Endothelial cell of umbilical vein (primary cell): ENCODE measurements at regions of chr3 and their contacts with region 1.

Region 1: DNA sequence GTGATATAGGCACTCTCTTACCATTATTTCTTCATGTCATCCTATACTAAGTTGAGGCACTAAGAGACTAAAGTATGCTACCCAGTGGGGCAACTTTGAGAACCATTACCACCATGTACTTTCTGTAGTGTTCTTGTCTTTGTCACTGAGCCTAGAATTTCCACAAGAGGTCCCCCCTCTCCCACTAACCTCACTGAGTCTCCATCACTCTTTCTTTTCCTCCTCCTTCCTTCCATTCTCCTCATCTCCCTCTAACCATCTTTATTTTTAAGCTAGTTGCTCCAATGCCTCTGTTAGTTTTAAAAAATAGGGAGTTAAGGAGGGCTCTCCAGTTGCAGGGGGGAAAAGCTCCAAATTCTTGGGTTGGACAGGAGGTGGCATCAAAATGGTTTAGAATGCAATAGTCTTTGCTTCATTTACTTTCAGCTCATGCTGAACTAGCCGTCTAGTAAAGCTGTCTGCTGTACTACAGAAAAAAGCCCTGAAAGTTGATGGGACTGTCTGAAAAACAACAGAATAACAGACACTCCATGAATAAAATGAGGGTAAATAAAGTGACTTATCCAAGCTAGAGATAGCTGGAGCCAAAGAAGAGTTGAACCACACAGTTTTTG is 85.1 kb upstream of the MYRIP start:
- DNase-seq: peak; percentile 58
- H3K4me3 ChIP-seq: no peak overlapping the region
- H3K27ac ChIP-seq: no peak overlapping the region
- H3K4me1 ChIP-seq: no peaks in the 10 kb centered on the region
- H3K27me3 ChIP-seq: no peaks in the 10 kb centered on the region
- CTCF ChIP-seq: peak; percentile 40 to 41
- POLR2A ChIP-seq: no peak

Region 2: DNA sequence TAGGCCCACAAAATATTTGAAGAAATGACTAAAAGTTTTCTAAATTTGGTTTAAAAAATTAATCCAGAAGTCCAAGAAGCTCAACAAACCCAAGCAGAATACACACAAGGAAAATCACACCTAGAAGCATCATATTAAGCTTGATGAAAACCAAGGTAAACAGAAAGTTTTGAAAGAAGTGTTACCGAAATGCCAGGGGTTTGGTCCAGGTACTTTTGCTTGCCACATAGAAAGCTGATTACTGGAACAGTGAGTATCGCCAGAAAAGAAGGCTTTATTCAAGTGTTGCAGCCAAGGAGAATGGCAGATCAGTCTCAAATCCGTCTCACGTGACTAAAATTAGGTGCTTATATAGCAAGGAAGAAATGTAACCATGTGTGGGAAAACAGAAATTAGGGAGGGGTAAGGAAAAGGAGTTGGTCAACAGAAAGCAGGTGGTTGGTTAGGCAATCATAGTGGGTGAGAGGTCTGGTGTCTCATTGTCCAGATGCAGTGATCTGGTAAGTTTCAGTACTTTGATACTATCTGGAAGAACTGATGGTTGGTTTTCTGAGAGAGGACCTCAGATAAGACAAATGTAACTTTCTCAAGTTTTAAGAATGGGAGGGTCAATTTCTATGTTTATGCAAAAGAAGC is 11.8 kb before region 1 on chr3:
- CTCF ChIA-PET with region 1: interaction called, 10 read pairs
- POLR2A ChIA-PET with region 1: no interaction called
- dilution Hi-C with region 1: no loop called
- intact Hi-C with region 1: no loop called
- DNase-seq: no peak
- H3K4me3 ChIP-seq: no peak overlapping the region
- H3K27ac ChIP-seq: no peak overlapping the region
- H3K4me1 ChIP-seq: no peaks in the 10 kb centered on the region
- H3K27me3 ChIP-seq: no peaks in the 10 kb centered on the region
- CTCF ChIP-seq: no peak
- POLR2A ChIP-seq: no peak

Region 3: DNA sequence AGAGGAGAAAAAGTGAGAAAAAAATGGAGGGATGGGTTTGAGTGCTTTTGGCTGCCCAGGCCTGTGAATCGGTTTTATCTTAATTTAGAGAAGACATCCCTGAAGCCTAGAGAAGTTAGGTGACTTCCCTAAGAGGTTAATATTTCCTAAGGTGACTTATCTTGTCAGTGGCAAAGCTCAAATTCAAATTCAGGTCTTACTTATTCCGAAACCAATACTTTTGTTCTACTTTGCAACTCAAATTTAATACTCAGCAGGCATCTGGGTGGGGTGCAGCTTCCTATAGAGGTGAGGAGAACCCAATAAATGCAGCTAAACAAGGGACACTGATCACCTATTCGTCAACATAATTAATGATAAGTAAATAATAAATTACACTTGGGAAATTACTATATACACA is 30.2 kb after region 1 on chr3:
- CTCF ChIA-PET with region 1: interaction called, 21 read pairs
- POLR2A ChIA-PET with region 1: no interaction called
- dilution Hi-C with region 1: no loop called
- intact Hi-C with region 1: no loop called
- DNase-seq: no peak
- H3K4me3 ChIP-seq: no peak overlapping the region
- H3K27ac ChIP-seq: no peak overlapping the region
- H3K4me1 ChIP-seq: peaks cover 61% of the 10 kb centered on the region
- H3K27me3 ChIP-seq: no peaks in the 10 kb centered on the region
- CTCF ChIP-seq: no peak
- POLR2A ChIP-seq: no peak

Region 4: GRCh38 chr3:39990532-39990931 is 266.2 kb after region 1 on chr3:
- CTCF ChIA-PET with region 1: interaction called, 56 read pairs
- POLR2A ChIA-PET with region 1: no interaction called
- dilution Hi-C with region 1: no loop called
- intact Hi-C with region 1: loop called (anchors 1 kb)
- DNase-seq: peak; percentile 70
- H3K4me3 ChIP-seq: no peak overlapping the region
- H3K27ac ChIP-seq: no peak overlapping the region
- H3K4me1 ChIP-seq: no peaks in the 10 kb centered on the region
- H3K27me3 ChIP-seq: no peaks in the 10 kb centered on the region
- CTCF ChIP-seq: peak; percentile 34 to 36
- POLR2A ChIP-seq: no peak

Region 5: DNA sequence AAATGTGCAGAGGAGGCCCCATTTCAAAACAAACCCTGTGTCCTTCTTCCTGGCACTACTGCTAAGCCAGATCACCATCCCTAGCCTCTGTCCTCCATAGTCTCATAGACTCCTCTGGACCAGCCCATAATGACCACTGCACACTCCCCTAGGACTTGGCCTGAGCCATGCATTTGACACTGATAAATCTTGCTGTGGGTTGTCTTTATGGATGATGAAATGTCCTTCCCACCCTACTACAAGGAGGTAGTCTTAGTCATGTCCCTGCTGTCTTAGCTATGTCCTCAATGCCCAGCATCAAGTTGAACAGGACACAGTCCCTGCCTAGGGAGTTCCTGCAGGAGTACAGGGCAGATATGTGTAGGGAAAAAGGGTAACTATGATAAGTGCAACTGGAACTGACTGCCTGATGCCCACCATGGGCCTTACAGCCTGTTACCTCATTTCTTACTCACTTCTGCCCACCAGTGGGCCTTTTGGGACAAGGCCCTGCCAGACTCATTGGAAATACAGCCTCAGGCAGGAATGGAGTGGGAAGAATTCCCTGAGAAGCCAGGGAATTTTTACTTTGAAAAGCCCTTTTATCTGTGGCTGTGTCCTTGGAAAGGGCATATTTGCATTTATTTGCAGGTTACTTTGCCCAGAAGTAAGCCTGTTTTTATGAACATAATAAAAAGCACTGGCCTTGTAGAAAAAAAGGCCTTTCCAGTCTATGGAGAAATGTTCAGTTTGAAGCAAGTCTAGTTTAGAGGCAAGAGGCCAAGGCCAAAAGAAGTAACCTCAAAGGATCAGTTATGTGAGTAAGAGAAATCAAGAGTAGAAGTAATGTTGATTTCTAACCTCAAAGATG is 385.5 kb after region 1 on chr3:
- CTCF ChIA-PET with region 1: interaction called, 7 read pairs
- POLR2A ChIA-PET with region 1: no interaction called
- dilution Hi-C with region 1: no loop called
- intact Hi-C with region 1: loop called (anchors 1 kb)
- DNase-seq: peak; percentile 61
- H3K4me3 ChIP-seq: no peak overlapping the region
- H3K27ac ChIP-seq: no peak overlapping the region
- H3K4me1 ChIP-seq: no peaks in the 10 kb centered on the region
- H3K27me3 ChIP-seq: no peaks in the 10 kb centered on the region
- CTCF ChIP-seq: peak; percentile 28 to 64
- POLR2A ChIP-seq: no peak

Region 6: GRCh38 chr3:40170395-40170794 is 446.1 kb after region 1 on chr3:
- CTCF ChIA-PET with region 1: interaction called, 10 read pairs
- POLR2A ChIA-PET with region 1: no interaction called
- dilution Hi-C with region 1: no loop called
- intact Hi-C with region 1: no loop called
- DNase-seq: no peak
- H3K4me3 ChIP-seq: no peak overlapping the region
- H3K27ac ChIP-seq: no peak overlapping the region
- H3K4me1 ChIP-seq: no peaks in the 10 kb centered on the region
- H3K27me3 ChIP-seq: no peaks in the 10 kb centered on the region
- CTCF ChIP-seq: no peak
- POLR2A ChIP-seq: no peak

Region 7: DNA sequence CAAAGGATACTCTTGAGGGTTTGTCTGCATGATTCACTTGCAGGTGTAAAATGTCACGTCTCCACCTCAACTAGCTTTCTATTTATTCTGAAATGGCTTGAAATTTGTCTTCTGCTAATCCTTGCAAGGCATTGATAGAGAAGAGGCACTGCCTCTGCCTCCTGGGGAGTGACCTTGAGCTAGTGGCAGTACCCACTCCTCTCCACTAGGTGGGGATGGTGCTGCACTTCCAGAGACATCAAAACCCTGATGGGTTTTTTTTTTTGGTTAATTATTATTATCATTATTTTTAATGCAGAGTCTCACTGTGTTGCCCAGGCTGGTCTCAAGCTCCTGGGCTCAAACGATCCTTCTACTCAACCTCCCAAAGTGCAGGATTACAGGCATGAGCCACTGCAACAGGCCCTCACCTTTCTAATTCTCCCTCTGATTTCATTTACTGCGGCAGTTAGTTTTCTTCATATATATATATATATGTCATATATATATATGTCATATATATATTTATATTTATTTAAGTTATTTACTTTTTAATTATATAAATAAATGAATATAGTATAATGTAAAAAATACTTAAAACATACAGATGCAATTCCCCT is 467.6 kb after region 1 on chr3:
- CTCF ChIA-PET with region 1: interaction called, 11 read pairs
- POLR2A ChIA-PET with region 1: no interaction called
- dilution Hi-C with region 1: no loop called
- intact Hi-C with region 1: no loop called
- DNase-seq: peak; percentile 63
- H3K4me3 ChIP-seq: no peak overlapping the region
- H3K27ac ChIP-seq: no peak overlapping the region
- H3K4me1 ChIP-seq: no peaks in the 10 kb centered on the region
- H3K27me3 ChIP-seq: no peaks in the 10 kb centered on the region
- CTCF ChIP-seq: peak; percentile 76 to 88
- POLR2A ChIP-seq: no peak